ENCODE measurements at regions of chr3 and their contacts with region 1.

Region 1: GRCh38 chr3:16290007-16290826 is 25.2 kb downstream of the OXNAD1 start:
- DNase-seq: no peak
- H3K4me3 Mint-ChIP-seq: peak overlapping the region; percentile 91
- H3K27ac Mint-ChIP-seq: peak overlapping the region; percentile 80
- H3K4me1 Mint-ChIP-seq: peaks cover 80% of the 10 kb centered on the region
- H3K27me3 Mint-ChIP-seq: no peaks in the 10 kb centered on the region

Region 2: DNA sequence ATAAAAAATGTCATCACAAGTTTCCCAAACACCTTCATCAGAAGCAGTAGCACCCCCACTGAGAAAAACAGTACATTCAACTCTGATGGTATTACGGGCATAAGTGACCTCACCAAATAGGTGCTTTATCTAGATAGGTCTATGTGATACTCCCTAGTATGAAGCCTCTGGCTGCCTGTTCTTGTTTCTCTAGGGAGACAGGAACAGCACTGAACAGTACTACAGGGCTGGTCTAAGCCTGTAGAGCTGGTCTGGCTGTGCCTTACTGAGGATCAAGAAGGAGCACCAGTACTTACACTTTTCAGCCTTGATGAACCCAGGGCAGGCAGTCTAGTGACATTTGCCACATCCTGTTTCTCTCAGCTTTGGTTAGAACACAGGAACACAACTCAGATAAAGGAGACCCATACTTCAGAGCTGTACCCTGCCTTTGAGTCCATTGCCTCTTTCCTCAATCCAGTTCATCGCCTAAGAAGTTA is 10.7 kb after region 1 on chr3:
- intact Hi-C with region 1: loop called (anchors 1 kb)
- DNase-seq: peak; percentile 63
- H3K4me3 Mint-ChIP-seq: peak overlapping the region; percentile 87
- H3K27ac Mint-ChIP-seq: peak overlapping the region; percentile 95
- H3K4me1 Mint-ChIP-seq: peaks cover 96% of the 10 kb centered on the region
- H3K27me3 Mint-ChIP-seq: no peaks in the 10 kb centered on the region

Region 3: DNA sequence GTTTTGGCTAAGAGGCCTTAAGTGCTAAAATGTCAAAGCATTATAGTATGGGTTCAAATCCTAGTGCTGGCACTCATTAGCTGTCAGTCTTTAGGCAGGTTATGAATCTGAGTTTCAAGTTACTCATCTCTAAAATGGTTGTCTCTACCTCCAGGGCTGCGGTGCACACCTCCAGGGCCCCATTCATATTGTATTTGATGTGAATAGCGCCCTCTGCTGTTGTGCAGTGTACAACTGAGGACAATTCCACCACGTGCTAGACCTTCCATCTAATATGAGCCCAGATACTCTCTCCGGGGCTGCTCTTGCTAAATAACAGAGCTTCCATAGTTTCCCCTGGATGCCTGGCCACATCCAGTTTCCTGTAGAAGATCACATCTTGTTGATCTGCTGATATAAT is 29.1 kb after region 1 on chr3:
- intact Hi-C with region 1: loop called (anchors 1 kb)
- DNase-seq: peak; percentile 74
- H3K4me3 Mint-ChIP-seq: peak overlapping the region; percentile 6
- H3K27ac Mint-ChIP-seq: peak overlapping the region; percentile 89
- H3K4me1 Mint-ChIP-seq: peaks cover 71% of the 10 kb centered on the region
- H3K27me3 Mint-ChIP-seq: no peaks in the 10 kb centered on the region

Region 4: GRCh38 chr3:16467393-16467792 is 177.2 kb after region 1 on chr3:
- intact Hi-C with region 1: loop called (anchors 5 kb)
- DNase-seq: peak; percentile 58
- H3K4me3 Mint-ChIP-seq: peak overlapping the region; percentile 76
- H3K27ac Mint-ChIP-seq: peak overlapping the region; percentile 92
- H3K4me1 Mint-ChIP-seq: peaks cover 80% of the 10 kb centered on the region
- H3K27me3 Mint-ChIP-seq: no peaks in the 10 kb centered on the region

Region 5: GRCh38 chr3:16842272-16843270 is 552.4 kb after region 1 on chr3:
- intact Hi-C with region 1: loop called (anchors 5 kb)
- DNase-seq: peak; percentile 73
- H3K4me3 Mint-ChIP-seq: peak overlapping the region; percentile 77
- H3K27ac Mint-ChIP-seq: peak overlapping the region; percentile 99
- H3K4me1 Mint-ChIP-seq: peaks cover 71% of the 10 kb centered on the region
- H3K27me3 Mint-ChIP-seq: peaks cover 3% of the 10 kb centered on the region

Region 6: DNA sequence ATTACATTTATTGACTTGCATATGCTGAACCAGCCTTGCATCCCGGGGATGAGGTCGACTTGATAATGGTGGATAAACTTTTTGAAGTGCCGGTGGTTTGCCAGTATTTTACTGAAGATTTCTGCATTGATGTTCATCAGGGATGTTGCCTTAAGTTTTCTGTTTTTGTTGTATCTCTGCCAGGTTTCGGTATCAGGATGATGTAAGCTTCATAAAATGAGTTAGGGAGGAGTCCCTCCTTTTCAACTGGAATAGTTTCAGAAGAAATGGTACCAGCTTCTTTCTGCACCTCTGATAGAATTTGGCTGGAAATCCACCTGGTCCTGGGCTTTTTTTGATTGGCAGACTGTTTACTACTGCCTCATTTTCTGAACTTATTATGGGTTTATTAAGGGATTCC is 1201.4 kb after region 1 on chr3:
- intact Hi-C with region 1: no loop called
- DNase-seq: no peak
- H3K4me3 Mint-ChIP-seq: no peak overlapping the region
- H3K27ac Mint-ChIP-seq: no peak overlapping the region
- H3K4me1 Mint-ChIP-seq: no peaks in the 10 kb centered on the region
- H3K27me3 Mint-ChIP-seq: no peaks in the 10 kb centered on the region